ENCODE measurements at regions of chr11 and their contacts with region 1.

Region 1: GRCh38 chr11:129695575-129696308 is 119.9 kb upstream of the TMEM45B start:
- DNase-seq: peak; percentile 81
- H3K4me3 Mint-ChIP-seq: peak overlapping the region; percentile 58
- H3K27ac Mint-ChIP-seq: no peak overlapping the region
- H3K4me1 Mint-ChIP-seq: peaks cover 12% of the 10 kb centered on the region
- H3K27me3 Mint-ChIP-seq: peaks cover 15% of the 10 kb centered on the region
- CTCF ChIP-seq: peak; percentile 78

Region 2: DNA sequence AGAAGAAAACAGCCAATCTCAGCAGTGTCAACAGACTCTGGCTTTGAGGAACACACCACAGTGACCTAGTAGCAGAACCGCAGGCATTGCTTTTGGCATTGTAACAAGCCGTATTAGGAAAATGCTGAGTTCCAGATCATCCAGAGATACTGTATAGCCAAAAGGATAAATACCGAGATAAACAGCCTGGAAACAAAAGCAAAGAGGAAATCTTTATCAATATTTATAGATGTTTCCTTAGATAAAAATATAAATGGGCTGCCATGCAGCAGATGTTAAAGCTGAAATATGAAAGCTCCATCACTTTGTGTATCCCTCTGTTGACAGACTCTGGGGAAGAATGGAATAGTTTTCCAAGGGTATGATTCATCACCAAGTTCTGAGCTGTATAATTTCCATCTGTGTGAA is 654.1 kb before region 1 on chr11:
- CTCF ChIA-PET with region 1: interaction called, 12 read pairs
- intact Hi-C with region 1: no loop called
- DNase-seq: no peak
- H3K4me3 Mint-ChIP-seq: no peak overlapping the region
- H3K27ac Mint-ChIP-seq: no peak overlapping the region
- H3K4me1 Mint-ChIP-seq: no peaks in the 10 kb centered on the region
- H3K27me3 Mint-ChIP-seq: no peaks in the 10 kb centered on the region
- CTCF ChIP-seq: no peak

Region 3: DNA sequence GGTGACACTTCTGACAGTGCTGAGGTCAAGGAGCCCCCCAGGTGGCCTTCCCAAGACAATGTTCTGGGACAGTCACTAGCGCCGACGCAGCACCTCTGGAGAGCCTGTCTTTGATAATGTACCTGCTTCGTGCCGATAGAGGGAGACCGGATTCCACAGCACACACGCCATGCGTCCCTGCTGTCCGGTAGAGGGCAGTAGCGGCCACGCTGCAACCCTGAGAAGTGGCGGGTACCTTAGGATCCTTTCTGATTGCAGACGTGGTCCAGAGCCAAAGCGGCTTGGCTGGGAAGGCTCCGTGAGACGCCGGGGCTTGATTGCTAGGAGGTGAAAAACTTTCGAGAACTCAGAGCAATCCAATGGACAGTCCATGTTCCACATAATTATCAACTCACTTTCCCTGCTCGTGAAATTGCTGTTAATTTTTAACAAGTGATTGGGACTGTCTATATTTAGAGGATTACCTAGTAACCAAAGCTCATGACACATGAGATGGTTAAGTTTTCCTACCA is 331.5 kb before region 1 on chr11:
- CTCF ChIA-PET with region 1: interaction called, 8 read pairs
- intact Hi-C with region 1: loop called (anchors 2 kb)
- DNase-seq: peak; percentile 88
- H3K4me3 Mint-ChIP-seq: no peak overlapping the region
- H3K27ac Mint-ChIP-seq: no peak overlapping the region
- H3K4me1 Mint-ChIP-seq: peaks cover 24% of the 10 kb centered on the region
- H3K27me3 Mint-ChIP-seq: no peaks in the 10 kb centered on the region
- CTCF ChIP-seq: peak; percentile 92

Region 4: GRCh38 chr11:129386795-129387397 is 308.8 kb before region 1 on chr11:
- CTCF ChIA-PET with region 1: no interaction called
- intact Hi-C with region 1: loop called (anchors 5 kb)
- DNase-seq: no peak
- H3K4me3 Mint-ChIP-seq: peak overlapping the region; percentile 67
- H3K27ac Mint-ChIP-seq: peak overlapping the region; percentile 90
- H3K4me1 Mint-ChIP-seq: peaks cover 85% of the 10 kb centered on the region
- H3K27me3 Mint-ChIP-seq: no peaks in the 10 kb centered on the region
- CTCF ChIP-seq: no peak

Region 5: DNA sequence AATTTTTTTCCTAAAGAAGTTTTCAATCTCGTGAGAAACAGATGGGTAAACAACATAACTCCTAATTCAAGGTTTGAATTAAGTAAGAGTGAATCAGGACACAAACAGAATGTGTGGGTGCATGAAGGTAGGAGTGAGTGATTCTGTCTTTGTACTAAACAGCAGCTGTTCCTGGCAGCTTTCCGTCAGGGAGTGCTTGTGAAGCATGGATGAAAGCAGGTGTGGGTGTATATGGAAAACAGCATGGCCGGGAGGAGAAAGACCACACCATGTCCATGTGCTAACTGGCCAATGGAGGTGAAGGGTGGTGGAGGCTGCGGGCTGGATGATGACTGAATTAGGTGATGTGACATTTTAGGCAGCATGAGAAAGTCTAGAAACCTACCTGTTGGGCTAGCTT is 270.5 kb before region 1 on chr11:
- CTCF ChIA-PET with region 1: interaction called, 12 read pairs
- intact Hi-C with region 1: loop called (anchors 10 kb)
- DNase-seq: no peak
- H3K4me3 Mint-ChIP-seq: peak overlapping the region; percentile 17
- H3K27ac Mint-ChIP-seq: peak overlapping the region; percentile 14
- H3K4me1 Mint-ChIP-seq: peaks cover 74% of the 10 kb centered on the region
- H3K27me3 Mint-ChIP-seq: no peaks in the 10 kb centered on the region
- CTCF ChIP-seq: no peak

Region 6: DNA sequence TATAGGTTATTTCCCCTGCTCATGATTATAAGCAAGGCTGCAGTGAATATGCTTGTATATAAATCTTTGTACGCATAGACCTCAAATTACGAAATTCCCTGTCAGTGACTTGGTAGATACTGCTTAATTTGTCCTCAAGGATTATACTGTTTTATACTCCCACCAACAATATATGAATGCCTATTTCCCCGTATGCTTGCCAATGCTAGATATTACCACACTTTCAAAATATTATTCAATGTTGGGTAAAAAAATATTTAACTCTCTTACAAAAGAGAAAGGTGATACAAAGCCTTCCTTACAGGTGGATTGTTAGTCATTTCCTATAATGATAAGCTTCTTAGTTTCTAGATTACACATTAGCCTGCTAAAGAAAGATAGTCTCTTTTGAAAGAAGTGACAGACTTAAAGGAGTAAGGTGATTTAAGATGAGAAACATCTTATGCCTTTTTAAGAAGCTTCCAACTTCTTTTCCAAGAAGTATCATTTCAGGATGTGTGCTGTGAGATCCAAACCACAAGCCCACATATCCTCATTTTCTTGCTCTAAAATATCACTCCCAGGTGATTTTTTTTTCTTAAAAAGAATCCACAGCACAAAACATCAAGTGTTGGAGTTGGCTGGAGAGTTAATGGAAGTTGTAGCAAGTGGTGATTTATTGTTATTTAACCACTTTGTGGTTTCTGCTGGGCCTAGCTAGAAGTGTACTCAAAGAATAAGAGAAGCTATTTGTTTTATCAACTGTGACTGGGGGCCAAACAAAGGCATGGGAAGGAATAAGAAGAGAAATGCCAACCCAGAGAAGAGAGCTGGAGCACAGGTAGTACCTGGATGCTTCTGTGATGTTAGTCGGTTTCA is 260.9 kb before region 1 on chr11:
- CTCF ChIA-PET with region 1: interaction called, 5 read pairs
- intact Hi-C with region 1: loop called (anchors 10 kb)
- DNase-seq: no peak
- H3K4me3 Mint-ChIP-seq: peak overlapping the region; percentile 54
- H3K27ac Mint-ChIP-seq: peak overlapping the region; percentile 99
- H3K4me1 Mint-ChIP-seq: peaks cover 61% of the 10 kb centered on the region
- H3K27me3 Mint-ChIP-seq: no peaks in the 10 kb centered on the region
- CTCF ChIP-seq: no peak

Region 7: GRCh38 chr11:129728575-129728974 is 32.8 kb after region 1 on chr11:
- CTCF ChIA-PET with region 1: no interaction called
- intact Hi-C with region 1: no loop called
- DNase-seq: peak; percentile 45
- H3K4me3 Mint-ChIP-seq: peak overlapping the region; percentile 30
- H3K27ac Mint-ChIP-seq: peak overlapping the region; percentile 56
- H3K4me1 Mint-ChIP-seq: peaks cover 51% of the 10 kb centered on the region
- H3K27me3 Mint-ChIP-seq: peaks cover 12% of the 10 kb centered on the region
- CTCF ChIP-seq: no peak

Region 8: DNA sequence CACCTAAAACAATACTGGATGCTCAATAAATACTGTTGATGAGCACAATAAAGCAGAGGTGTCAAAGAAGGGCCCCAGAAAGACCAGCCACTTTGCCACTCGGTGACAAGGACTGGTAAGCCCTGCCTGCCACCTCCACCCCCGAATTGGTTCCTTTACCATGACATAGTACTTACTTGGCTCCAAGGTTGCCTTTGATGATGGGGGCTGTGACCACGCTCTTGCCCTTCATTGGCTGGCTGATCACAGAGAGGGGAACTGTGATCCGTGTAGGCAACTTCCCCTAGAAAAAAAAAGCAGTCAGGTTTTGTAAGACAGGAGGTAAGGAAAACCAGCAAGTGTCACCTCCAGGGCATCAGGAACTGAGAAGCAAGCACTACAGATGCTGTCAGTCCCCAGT is 170.0 kb after region 1 on chr11:
- CTCF ChIA-PET with region 1: no interaction called
- intact Hi-C with region 1: no loop called
- DNase-seq: no peak
- H3K4me3 Mint-ChIP-seq: no peak overlapping the region
- H3K27ac Mint-ChIP-seq: peak overlapping the region; percentile 36
- H3K4me1 Mint-ChIP-seq: peaks cover 19% of the 10 kb centered on the region
- H3K27me3 Mint-ChIP-seq: no peaks in the 10 kb centered on the region
- CTCF ChIP-seq: no peak

Region 9: DNA sequence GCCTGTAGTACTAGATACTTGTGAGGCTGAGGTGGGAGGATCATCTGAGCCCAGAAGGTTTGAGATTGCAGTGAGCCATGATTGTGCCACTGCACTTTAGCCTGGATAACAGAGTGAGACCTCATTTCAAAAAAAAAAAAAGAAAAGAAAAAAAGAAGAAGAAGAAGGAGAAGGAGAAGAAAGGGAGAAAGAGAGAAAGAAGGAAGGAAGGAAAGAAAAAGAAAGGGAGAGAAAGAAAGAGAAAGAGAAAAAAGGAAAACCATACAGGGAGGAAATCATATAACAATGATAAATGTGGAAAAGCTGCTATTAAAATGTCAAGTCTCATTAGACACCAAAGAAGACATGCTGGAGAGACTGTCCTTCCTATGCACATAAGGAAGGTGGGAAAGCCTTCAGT is 312.6 kb after region 1 on chr11:
- CTCF ChIA-PET with region 1: no interaction called
- intact Hi-C with region 1: no loop called
- DNase-seq: no peak
- H3K4me3 Mint-ChIP-seq: no peak overlapping the region
- H3K27ac Mint-ChIP-seq: no peak overlapping the region
- H3K4me1 Mint-ChIP-seq: peaks cover 5% of the 10 kb centered on the region
- H3K27me3 Mint-ChIP-seq: no peaks in the 10 kb centered on the region
- CTCF ChIP-seq: no peak

Measured in Calu3 (cell line).